MCF 10A (cell line): ENCODE measurements at regions of chr14 and their contacts with region 1.

Region 1: DNA sequence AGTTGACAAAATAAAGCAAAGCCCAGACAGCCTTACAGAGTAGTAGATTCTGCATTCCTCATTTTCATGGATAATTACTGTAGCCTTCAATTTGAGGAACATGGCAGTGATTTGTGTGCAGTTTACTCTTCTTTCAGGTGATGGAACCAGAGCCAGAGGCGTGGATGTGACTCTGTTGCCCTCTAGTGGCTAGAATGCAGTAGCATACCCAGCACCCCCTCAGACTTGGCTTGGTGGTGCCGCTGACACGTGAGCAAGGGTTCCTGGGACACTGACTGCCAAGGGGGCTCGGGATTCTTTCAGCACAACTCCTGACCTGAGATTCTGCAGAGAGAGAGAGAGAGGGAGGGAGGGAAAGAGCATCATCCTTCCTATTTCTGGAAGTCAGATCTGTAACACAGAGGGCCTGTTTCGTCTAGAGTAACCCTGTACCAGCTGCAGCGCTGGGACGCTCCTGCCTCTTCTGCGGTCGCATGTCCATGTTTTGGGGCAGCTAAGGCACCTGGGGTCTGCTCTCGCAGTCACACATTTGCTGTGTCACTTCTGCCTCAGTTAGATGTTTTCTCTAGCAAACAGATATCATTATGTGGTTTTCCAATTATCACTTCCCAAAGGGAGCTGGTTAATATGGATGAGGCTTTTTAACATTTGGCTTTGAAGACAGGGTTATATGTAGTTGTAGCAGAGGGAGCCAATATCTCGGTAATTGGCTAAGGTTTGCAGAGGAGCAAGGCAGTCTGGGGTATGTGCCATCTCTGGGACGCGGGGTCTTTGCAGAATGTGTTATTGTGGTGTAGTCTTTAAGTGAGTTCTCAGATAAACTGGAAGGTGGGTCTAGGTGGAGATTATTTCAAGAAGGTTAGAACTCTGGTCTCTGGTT is 428.1 kb downstream of the NRXN3 start:
- DNase-seq: peak; percentile 52
- H3K4me3 Mint-ChIP-seq: no peak overlapping the region
- H3K27ac Mint-ChIP-seq: no peak overlapping the region
- H3K4me1 Mint-ChIP-seq: no peaks in the 10 kb centered on the region
- H3K27me3 Mint-ChIP-seq: peaks cover 38% of the 10 kb centered on the region
- CTCF ChIP-seq: peak; percentile 91

Region 2: DNA sequence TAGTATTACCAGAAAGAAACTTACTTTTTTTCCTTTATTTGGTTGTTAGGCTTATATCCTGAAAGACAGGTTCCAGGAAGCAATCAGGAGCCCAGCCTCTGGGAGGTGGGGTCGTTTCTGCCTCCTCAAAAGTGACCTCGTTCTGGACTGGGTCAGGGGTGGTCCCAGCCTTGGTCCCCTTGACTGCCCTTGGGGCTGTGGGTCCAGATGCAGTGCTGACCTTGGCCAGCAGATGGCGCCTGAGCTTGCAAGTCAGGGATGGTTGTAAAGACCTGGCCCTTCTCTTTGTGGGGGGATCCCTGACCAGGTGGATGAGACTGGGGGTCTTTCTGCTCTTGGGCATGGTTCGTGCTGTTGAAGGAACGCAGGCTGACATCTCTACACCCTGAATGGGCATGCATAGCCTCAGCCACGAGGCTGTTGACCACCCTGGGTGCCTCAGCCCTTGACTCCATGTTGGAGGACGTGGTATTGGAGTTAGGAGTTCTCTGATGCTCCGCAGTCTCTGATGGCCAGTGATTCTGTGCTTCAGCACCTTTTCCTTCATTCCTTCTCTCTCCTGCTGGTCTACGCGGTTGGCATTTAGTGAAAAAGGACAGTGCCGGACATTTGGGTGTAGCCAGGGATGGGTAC is 736.0 kb before region 1 on chr14:
- CTCF ChIA-PET with region 1: interaction called, 52 read pairs
- POLR2A ChIA-PET with region 1: no interaction called
- intact Hi-C with region 1: loop called (anchors 1 kb)
- DNase-seq: peak; percentile 58
- H3K4me3 Mint-ChIP-seq: no peak overlapping the region
- H3K27ac Mint-ChIP-seq: no peak overlapping the region
- H3K4me1 Mint-ChIP-seq: peaks cover 7% of the 10 kb centered on the region
- H3K27me3 Mint-ChIP-seq: no peaks in the 10 kb centered on the region
- CTCF ChIP-seq: peak; percentile 94

Region 3: GRCh38 chr14:78170203-78170602 is 428.1 kb before region 1 on chr14 and contains the start of gene NRXN3:
- CTCF ChIA-PET with region 1: no interaction called
- POLR2A ChIA-PET with region 1: no interaction called
- intact Hi-C with region 1: no loop called
- DNase-seq: no peak
- H3K4me3 Mint-ChIP-seq: no peak within 1 kb of the TSS
- H3K27ac Mint-ChIP-seq: no peak within 1 kb of the TSS
- H3K4me1 Mint-ChIP-seq: no peaks in the 10 kb centered on the region
- H3K27me3 Mint-ChIP-seq: peaks cover 87% of the 10 kb centered on the region
- CTCF ChIP-seq: no peak
- total RNA-seq, gene NRXN3: not detected in 2 replicates

Region 4: DNA sequence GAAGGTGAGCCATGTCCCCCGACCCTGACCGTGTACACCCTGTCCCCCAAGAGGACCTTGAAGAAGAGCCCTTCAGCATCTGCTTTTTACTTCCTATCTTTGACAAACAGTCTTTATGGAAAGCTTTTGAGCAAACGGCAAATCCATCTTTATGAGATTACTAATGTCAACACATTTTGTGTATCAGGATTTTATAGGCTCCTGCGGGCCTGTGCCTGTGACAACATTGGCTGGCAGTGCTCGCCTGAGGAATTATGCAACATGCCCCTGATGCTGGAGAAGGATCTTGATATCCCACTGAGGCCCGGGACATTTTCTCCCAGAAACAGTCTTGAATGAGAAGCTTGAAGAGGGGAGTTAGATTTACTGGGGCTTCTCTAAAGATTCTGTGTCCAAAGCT is 11.6 kb before region 1 on chr14:
- CTCF ChIA-PET with region 1: interaction called, 28 read pairs
- POLR2A ChIA-PET with region 1: no interaction called
- intact Hi-C with region 1: no loop called
- DNase-seq: no peak
- H3K4me3 Mint-ChIP-seq: no peak overlapping the region
- H3K27ac Mint-ChIP-seq: no peak overlapping the region
- H3K4me1 Mint-ChIP-seq: no peaks in the 10 kb centered on the region
- H3K27me3 Mint-ChIP-seq: peaks cover 18% of the 10 kb centered on the region
- CTCF ChIP-seq: no peak

Region 5: GRCh38 chr14:78618368-78618767 is 20.1 kb after region 1 on chr14:
- CTCF ChIA-PET with region 1: interaction called, 28 read pairs
- POLR2A ChIA-PET with region 1: no interaction called
- intact Hi-C with region 1: no loop called
- DNase-seq: no peak
- H3K4me3 Mint-ChIP-seq: no peak overlapping the region
- H3K27ac Mint-ChIP-seq: no peak overlapping the region
- H3K4me1 Mint-ChIP-seq: no peaks in the 10 kb centered on the region
- H3K27me3 Mint-ChIP-seq: peaks cover 14% of the 10 kb centered on the region
- CTCF ChIP-seq: no peak

Region 6: DNA sequence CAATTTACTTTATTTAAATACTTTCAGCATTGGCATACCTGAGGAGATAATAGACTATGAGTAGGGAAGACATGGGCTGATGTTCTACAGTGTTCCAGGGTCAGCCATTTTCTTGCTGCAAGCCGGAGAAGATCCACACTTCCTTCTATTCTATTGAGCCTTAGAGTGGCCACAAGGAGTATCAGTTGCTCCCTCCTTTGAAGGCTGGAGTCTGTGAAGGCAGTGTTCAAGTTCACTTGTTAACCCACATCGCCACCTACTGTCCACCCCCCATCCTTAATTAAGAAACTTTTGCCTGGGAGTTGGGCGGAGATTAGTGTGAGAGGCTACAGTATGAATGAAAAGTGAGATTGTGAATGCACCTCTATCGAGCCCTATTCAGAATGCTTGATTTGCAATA is 238.5 kb after region 1 on chr14:
- CTCF ChIA-PET with region 1: interaction called, 7 read pairs
- POLR2A ChIA-PET with region 1: no interaction called
- intact Hi-C with region 1: loop called (anchors 1 kb)
- DNase-seq: peak; percentile 76
- H3K4me3 Mint-ChIP-seq: no peak overlapping the region
- H3K27ac Mint-ChIP-seq: no peak overlapping the region
- H3K4me1 Mint-ChIP-seq: no peaks in the 10 kb centered on the region
- H3K27me3 Mint-ChIP-seq: peaks cover 76% of the 10 kb centered on the region
- CTCF ChIP-seq: peak; percentile 66